PC-3 (cell line): ENCODE measurements at regions of chr3 and their contacts with region 1.

Region 1: DNA sequence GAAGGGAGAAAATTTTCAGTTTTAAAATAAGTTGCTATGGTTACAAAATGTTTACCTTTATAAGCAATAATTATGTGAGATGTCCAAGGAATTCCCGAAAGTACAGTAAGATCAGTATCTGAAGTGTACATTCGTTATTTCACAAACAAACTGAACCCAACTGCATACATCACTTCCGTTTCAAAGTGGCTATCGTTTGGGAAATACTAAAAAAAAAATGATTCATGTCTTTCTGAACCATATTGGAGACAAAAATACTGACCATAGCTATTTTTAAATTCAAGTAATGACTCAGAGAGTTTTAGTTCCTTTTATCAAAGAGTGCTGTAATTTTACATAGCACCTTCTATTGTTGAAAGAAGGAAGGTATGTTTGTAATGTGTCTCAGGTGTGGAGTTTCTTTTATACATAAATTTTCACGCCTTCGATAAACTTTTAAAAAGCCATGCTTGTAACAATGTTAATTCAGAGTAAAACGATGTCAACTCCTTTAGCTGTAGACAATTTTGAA is 8.0 kb upstream of the ANKRD28 start:
- DNase-seq: peak; percentile 77
- ATAC-seq: peak; percentile 47
- H3K4me3 ChIP-seq: 0 out of 2 replicates have a peak overlapping the region, but pooled peaks have one; percentile 8
- H3K27ac ChIP-seq: peak overlapping the region; percentile 75
- H3K4me1 ChIP-seq: peaks cover 38% of the 10 kb centered on the region
- H3K27me3 ChIP-seq: no peaks in the 10 kb centered on the region
- CTCF ChIP-seq: no peak

Region 2: DNA sequence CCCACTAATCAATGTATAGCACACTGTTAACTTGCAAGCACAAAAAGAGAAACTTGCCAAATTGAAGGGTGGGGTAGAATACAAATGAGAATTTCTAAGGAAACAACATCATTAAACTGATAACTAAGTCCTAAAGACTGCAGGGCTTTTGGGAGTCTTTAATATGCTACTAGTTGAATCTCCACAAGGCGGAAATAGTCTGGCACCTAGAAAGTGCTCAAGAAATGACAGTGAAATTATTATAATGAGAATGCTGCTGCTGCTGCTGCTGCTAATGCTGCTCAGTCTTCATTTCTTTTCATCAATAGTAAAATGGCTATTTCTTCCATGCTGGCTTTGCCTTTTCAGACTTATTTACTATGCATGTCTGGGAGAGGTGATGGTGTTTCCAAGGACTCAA is 112.5 kb before region 1 on chr3:
- CTCF ChIA-PET with region 1: no interaction called
- POLR2A ChIA-PET with region 1: interaction called, 3 read pairs
- intact Hi-C with region 1: loop called (anchors 2 kb)
- DNase-seq: peak; percentile 46
- ATAC-seq: peak; percentile 74
- H3K4me3 ChIP-seq: no peak overlapping the region
- H3K27ac ChIP-seq: no peak overlapping the region
- H3K4me1 ChIP-seq: no peaks in the 10 kb centered on the region
- H3K27me3 ChIP-seq: no peaks in the 10 kb centered on the region
- CTCF ChIP-seq: peak; percentile 48